ENCODE measurements at regions of chr3 and their contacts with region 1.

Region 1: DNA sequence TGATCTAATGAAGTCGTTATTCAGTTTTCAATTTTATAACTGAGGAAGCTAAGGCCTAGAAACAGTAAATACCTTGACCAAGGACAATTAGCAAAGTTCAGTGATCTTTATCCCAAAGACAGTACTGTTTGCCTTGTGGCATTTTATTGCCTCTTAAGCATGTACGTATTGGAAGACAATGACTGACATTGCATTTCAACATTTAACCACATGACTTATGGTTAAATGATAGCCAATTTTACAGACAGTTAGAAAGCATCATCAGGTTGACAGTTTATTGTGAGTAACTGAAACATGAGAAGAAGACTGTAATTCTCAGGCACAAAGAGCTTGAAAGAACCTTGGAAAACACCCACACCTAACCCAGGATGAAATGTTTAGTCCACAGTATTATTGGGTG is 390.8 kb upstream of the ZNF385D start:
- DNase-seq: peak; percentile 73
- ATAC-seq: peak; percentile 91
- H3K4me3 ChIP-seq: no peak overlapping the region
- H3K27ac ChIP-seq: peak overlapping the region; percentile 41
- H3K4me1 ChIP-seq: peaks cover 17% of the 10 kb centered on the region
- H3K27me3 ChIP-seq: no peaks in the 10 kb centered on the region
- CTCF ChIP-seq: no peak

Region 2: DNA sequence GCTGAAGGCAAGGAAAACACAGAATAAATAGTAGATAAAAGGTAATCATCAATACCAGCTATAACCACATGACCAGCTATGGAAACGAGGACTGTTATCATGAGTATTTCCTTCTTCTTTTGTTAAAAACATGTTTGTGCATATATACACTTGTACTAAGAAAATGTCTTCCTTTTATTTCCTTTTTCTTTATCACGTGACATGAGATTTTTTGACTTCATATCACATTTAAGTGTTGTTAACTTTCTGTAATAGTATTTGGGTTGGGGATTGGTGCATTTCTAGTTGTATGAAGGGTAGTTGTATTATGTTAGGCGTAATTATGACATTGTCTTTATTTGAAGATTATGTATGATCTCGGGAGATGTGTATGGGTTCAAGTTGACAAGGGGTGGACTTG is 112.3 kb before region 1 on chr3:
- CTCF ChIA-PET with region 1: no interaction called
- POLR2A ChIA-PET with region 1: no interaction called
- intact Hi-C with region 1: no loop called
- DNase-seq: no peak
- ATAC-seq: no peak
- H3K4me3 ChIP-seq: no peak overlapping the region
- H3K27ac ChIP-seq: no peak overlapping the region
- H3K4me1 ChIP-seq: no peaks in the 10 kb centered on the region
- H3K27me3 ChIP-seq: no peaks in the 10 kb centered on the region
- CTCF ChIP-seq: no peak

Region 3: DNA sequence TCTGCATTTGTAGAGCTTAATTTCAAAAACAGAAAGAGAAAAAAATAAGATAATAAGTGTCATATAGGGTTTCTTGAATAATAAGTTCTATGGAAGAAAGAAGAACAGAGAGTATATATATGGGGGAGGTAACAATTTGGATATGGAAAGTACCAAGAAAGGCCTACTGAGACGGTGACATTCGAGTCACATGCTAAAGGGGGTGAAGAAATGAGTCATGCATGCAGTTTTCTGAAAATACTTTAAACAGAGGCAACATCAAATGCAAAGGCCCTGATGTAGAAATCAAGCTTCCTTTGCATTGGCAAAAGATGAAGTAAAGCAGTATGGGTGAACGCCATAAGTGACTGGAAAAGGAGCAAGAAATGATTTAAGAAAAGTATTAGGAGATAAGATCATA is 19.2 kb before region 1 on chr3:
- CTCF ChIA-PET with region 1: no interaction called
- POLR2A ChIA-PET with region 1: no interaction called
- intact Hi-C with region 1: no loop called
- DNase-seq: no peak
- ATAC-seq: no peak
- H3K4me3 ChIP-seq: no peak overlapping the region
- H3K27ac ChIP-seq: no peak overlapping the region
- H3K4me1 ChIP-seq: no peaks in the 10 kb centered on the region
- H3K27me3 ChIP-seq: no peaks in the 10 kb centered on the region
- CTCF ChIP-seq: no peak

Region 4: GRCh38 chr3:22159004-22159695 is 17.4 kb after region 1 on chr3:
- CTCF ChIA-PET with region 1: interaction called, 3 read pairs
- POLR2A ChIA-PET with region 1: no interaction called
- intact Hi-C with region 1: loop called (anchors 1 kb)
- DNase-seq: peak; percentile 89
- ATAC-seq: peak; percentile 85
- H3K4me3 ChIP-seq: no peak overlapping the region
- H3K27ac ChIP-seq: peak overlapping the region; percentile 27
- H3K4me1 ChIP-seq: peaks cover 46% of the 10 kb centered on the region
- H3K27me3 ChIP-seq: no peaks in the 10 kb centered on the region
- CTCF ChIP-seq: no peak

Measured in PC-3 (cell line).